Calu3 (cell line): ENCODE measurements at regions of chr10 and their contacts with region 1.

Region 1: DNA sequence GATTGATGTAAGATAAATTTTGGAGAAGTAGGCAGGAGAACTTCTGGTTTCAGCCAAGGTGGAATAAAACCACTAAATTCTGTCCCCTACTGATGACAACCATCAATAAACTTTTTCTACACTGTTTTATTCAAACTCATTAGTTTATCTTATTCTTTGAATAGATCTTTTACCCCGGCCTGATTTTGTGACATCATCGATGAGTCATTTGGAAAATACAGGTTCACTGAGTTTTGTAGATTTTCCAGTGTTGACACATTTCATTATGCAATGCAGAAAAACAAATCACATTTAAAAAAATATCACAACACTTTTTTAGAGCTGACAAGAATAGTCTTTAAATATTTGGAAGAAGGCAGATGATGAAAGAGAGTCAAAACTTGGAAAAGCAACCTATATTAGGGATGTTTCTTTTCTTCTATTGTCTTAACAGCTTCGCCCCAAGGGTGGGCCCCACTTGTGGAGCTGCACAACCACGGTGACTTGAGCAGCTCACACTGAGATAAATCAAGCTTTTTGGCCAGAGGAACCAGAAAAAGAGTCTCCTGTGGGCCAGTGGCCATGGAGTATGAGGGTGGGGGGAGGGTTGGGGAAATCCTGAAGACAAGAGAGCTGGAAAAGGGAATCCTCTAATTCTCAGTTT is 112.8 kb downstream of the PTEN start:
- DNase-seq: no peak
- H3K4me3 Mint-ChIP-seq: no peak overlapping the region
- H3K27ac Mint-ChIP-seq: no peak overlapping the region
- H3K4me1 Mint-ChIP-seq: no peaks in the 10 kb centered on the region
- H3K27me3 Mint-ChIP-seq: no peaks in the 10 kb centered on the region
- CTCF ChIP-seq: no peak

Region 2: GRCh38 chr10:87734987-87735827 is 241.0 kb before region 1 on chr10:
- CTCF ChIA-PET with region 1: no interaction called
- intact Hi-C with region 1: no loop called
- DNase-seq: peak; percentile 20
- H3K4me3 Mint-ChIP-seq: no peak overlapping the region
- H3K27ac Mint-ChIP-seq: no peak overlapping the region
- H3K4me1 Mint-ChIP-seq: peaks cover 6% of the 10 kb centered on the region
- H3K27me3 Mint-ChIP-seq: no peaks in the 10 kb centered on the region
- CTCF ChIP-seq: peak; percentile 55

Region 3: DNA sequence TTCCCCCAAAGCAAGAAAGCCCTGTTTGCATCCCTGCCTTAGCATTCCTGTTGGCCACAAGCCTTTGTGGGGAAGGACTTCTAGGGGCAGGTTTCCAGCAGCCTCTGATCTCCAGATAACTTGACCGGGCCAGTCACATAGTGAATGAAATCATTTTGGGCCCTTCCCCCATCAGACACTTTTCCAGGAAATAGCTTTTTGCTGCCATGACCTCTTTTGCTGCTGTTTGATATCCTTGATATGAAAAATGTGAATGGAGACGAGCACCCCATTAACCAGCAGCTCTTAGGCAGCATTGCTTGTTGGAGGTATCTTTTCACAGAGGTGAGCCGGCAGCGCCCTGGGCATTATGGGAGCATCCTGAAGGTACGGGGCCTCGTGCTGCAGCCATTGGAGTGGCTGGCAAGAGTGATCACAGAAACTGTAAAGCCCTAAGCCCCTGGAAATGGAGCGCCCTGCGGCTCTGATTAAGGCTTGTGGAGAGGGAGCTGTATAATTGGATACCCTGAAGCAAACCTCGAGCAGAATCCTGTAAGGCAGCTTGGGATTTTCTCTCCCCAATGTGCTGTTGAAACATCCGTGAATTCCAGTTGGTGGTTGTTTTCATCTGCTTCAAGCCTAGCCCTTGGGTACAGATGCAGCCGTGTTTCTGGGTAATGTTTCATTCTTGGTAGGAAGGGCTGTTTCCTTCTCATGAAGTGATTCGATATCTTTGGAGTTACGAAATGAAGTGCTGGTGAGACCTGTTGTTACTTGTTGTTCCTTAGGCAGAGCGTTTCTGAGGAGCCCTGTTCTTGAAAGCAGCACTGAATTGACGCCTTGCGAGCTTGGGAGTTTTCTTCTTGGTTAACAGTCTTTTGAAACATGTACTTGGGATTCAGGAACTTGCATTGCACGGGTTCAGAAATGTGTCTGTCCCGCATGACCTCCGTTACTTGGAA is 66.2 kb after region 1 on chr10:
- CTCF ChIA-PET with region 1: no interaction called
- intact Hi-C with region 1: no loop called
- DNase-seq: no peak
- H3K4me3 Mint-ChIP-seq: no peak overlapping the region
- H3K27ac Mint-ChIP-seq: no peak overlapping the region
- H3K4me1 Mint-ChIP-seq: peaks cover 8% of the 10 kb centered on the region
- H3K27me3 Mint-ChIP-seq: no peaks in the 10 kb centered on the region
- CTCF ChIP-seq: no peak

Region 4: DNA sequence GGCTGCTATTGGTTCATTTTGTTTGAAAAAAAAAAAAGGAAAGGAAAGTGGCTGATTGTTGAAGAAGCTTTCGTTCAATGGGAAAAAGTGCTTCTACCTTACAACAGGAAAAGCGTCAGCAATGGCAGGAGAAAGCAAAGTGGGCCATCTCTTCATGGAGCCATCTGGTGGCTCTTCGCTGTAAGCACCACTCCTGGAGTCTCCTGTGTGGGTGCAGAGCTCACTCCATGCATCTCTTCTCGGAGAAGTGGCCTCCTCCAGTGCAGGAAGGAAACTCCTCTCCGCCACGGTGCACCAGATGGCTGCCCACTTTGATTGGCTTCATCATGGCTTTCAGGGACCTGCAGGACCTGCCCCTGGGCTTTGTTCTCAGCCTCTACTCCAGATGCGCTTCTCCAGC is 138.1 kb after region 1 on chr10:
- CTCF ChIA-PET with region 1: no interaction called
- intact Hi-C with region 1: loop called (anchors 10 kb)
- DNase-seq: peak; percentile 32
- H3K4me3 Mint-ChIP-seq: no peak overlapping the region
- H3K27ac Mint-ChIP-seq: no peak overlapping the region
- H3K4me1 Mint-ChIP-seq: peaks cover 16% of the 10 kb centered on the region
- H3K27me3 Mint-ChIP-seq: no peaks in the 10 kb centered on the region
- CTCF ChIP-seq: no peak